ENCODE measurements at regions of chr15 and their contacts with region 1.

Region 1: GRCh38 chr15:83248151-83249029 is 36.1 kb downstream of the BNC1 start:
- DNase-seq: peak; percentile 5
- H3K4me3 ChIP-seq: no peak overlapping the region
- CTCF ChIP-seq: peak; percentile 62

Region 2: GRCh38 chr15:83230258-83230657 is 18.1 kb before region 1 on chr15:
- CTCF ChIA-PET with region 1: interaction called, 17 read pairs
- POLR2A ChIA-PET with region 1: interaction called, 3 read pairs
- DNase-seq: no peak
- H3K4me3 ChIP-seq: no peak overlapping the region
- CTCF ChIP-seq: no peak

Region 3: GRCh38 chr15:83356501-83357399 is 108.4 kb after region 1 on chr15:
- CTCF ChIA-PET with region 1: interaction called, 11 read pairs
- POLR2A ChIA-PET with region 1: no interaction called
- DNase-seq: no peak
- H3K4me3 ChIP-seq: no peak overlapping the region
- CTCF ChIP-seq: no peak

Region 4: DNA sequence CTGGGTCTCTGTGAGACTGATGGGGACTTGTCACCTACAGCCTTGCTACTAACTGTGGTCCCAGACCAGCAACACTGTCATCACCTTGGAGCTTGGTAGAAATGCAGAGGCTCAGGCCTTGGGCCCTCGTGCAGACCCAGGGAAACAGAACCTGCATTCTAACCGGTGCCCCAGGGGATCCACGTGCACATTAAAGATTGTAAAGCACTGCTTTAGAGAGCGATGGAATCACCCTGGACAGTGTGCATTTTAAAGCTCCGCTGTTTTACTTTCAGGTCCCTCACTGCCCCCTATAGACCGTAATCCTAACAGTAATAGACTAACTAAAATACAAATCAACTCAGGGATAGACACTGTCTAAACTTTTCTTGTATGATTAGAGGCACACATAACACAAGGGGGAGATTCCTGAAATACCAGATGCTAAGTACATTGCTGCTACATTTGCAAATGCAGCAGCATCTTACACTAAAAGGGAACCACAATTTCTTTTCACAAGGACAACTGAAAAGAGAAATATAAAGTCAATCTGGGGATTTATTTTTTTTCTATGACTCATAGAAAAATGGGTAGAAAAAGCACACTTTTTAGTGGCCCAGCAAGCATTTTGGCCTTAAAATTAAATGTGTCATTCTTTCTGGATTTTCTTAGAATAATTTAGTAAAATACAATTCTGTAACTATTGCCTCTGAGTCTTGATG is 188.2 kb after region 1 on chr15:
- CTCF ChIA-PET with region 1: interaction called, 370 read pairs
- POLR2A ChIA-PET with region 1: no interaction called
- DNase-seq: peak; percentile 9
- H3K4me3 ChIP-seq: no peak overlapping the region
- CTCF ChIP-seq: peak; percentile 53

Region 5: GRCh38 chr15:83516935-83517334 is 268.5 kb after region 1 on chr15:
- CTCF ChIA-PET with region 1: no interaction called
- POLR2A ChIA-PET with region 1: no interaction called
- DNase-seq: no peak
- H3K4me3 ChIP-seq: no peak overlapping the region
- CTCF ChIP-seq: no peak

Region 6: GRCh38 chr15:83559310-83559966 is 311.0 kb after region 1 on chr15:
- CTCF ChIA-PET with region 1: interaction called, 212 read pairs
- POLR2A ChIA-PET with region 1: no interaction called
- DNase-seq: peak; percentile 21
- H3K4me3 ChIP-seq: no peak overlapping the region
- CTCF ChIP-seq: peak; percentile 81

Region 7: GRCh38 chr15:83631534-83631933 is 383.1 kb after region 1 on chr15:
- CTCF ChIA-PET with region 1: no interaction called
- POLR2A ChIA-PET with region 1: no interaction called
- DNase-seq: no peak
- H3K4me3 ChIP-seq: no peak overlapping the region
- CTCF ChIP-seq: no peak

Measured in AG04449 (cell line).